Activated B cell treated with CpG ODN at 0.5 μM for 24 hours (primary cell): ENCODE measurements at regions of chr2 and their contacts with region 1.

Region 1: DNA sequence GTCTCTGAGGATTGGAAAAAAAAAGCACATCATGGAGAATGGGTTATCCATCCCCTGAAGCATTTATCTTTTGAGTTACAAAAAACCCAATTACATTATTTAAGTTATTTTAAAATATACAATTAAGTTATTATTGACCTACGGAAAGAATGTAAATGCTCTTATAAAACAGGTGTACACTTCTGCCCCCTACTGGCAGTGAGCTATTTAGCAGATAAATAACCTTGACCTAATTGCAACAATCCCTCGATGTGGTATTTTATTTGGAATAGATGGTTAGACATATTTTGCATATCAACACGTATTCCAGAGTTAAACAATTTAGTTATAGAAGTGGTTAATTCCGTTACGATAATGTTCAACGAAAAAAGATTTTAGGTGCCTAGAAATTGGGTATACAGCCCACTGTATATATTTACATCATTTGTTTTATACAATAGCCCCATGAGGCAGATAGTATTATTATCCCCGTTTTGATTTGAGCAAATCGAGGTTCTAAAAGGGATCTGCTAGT is 9.1 kb upstream of the DAW1 start:
- DNase-seq: no peak
- ATAC-seq: no peak
- H3K4me3 Mint-ChIP-seq: no peak overlapping the region
- H3K27ac Mint-ChIP-seq: no peak overlapping the region
- H3K4me1 Mint-ChIP-seq: no peaks in the 10 kb centered on the region
- H3K27me3 Mint-ChIP-seq: no peaks in the 10 kb centered on the region
- CTCF ChIP-seq: no peak

Region 2: GRCh38 chr2:227125506-227125905 is 736.8 kb before region 1 on chr2:
- CTCF ChIA-PET with region 1: no interaction called
- POLR2A ChIA-PET with region 1: no interaction called
- intact Hi-C with region 1: loop called (anchors 5 kb)
- DNase-seq: no peak
- ATAC-seq: no peak
- H3K4me3 Mint-ChIP-seq: no peak overlapping the region
- H3K27ac Mint-ChIP-seq: no peak overlapping the region
- H3K4me1 Mint-ChIP-seq: no peaks in the 10 kb centered on the region
- H3K27me3 Mint-ChIP-seq: peaks cover 2% of the 10 kb centered on the region
- CTCF ChIP-seq: no peak

Region 3: GRCh38 chr2:227655454-227655853 is 206.8 kb before region 1 on chr2:
- CTCF ChIA-PET with region 1: no interaction called
- POLR2A ChIA-PET with region 1: no interaction called
- intact Hi-C with region 1: loop called (anchors 1 kb)
- DNase-seq: no peak
- ATAC-seq: no peak
- H3K4me3 Mint-ChIP-seq: no peak overlapping the region
- H3K27ac Mint-ChIP-seq: no peak overlapping the region
- H3K4me1 Mint-ChIP-seq: no peaks in the 10 kb centered on the region
- H3K27me3 Mint-ChIP-seq: peaks cover 7% of the 10 kb centered on the region
- CTCF ChIP-seq: no peak

Region 4: GRCh38 chr2:227848586-227848985 is 13.7 kb before region 1 on chr2:
- CTCF ChIA-PET with region 1: no interaction called
- POLR2A ChIA-PET with region 1: no interaction called
- intact Hi-C with region 1: no loop called
- DNase-seq: no peak
- ATAC-seq: no peak
- H3K4me3 Mint-ChIP-seq: no peak overlapping the region
- H3K27ac Mint-ChIP-seq: no peak overlapping the region
- H3K4me1 Mint-ChIP-seq: no peaks in the 10 kb centered on the region
- H3K27me3 Mint-ChIP-seq: peaks cover 5% of the 10 kb centered on the region
- CTCF ChIP-seq: no peak

Region 5: GRCh38 chr2:228063558-228063957 is 201.3 kb after region 1 on chr2:
- CTCF ChIA-PET with region 1: no interaction called
- POLR2A ChIA-PET with region 1: no interaction called
- intact Hi-C with region 1: no loop called
- DNase-seq: no peak
- ATAC-seq: no peak
- H3K4me3 Mint-ChIP-seq: no peak overlapping the region
- H3K27ac Mint-ChIP-seq: no peak overlapping the region
- H3K4me1 Mint-ChIP-seq: no peaks in the 10 kb centered on the region
- H3K27me3 Mint-ChIP-seq: no peaks in the 10 kb centered on the region
- CTCF ChIP-seq: no peak